IMR-90 (cell line): ENCODE measurements at regions of chr17 and their contacts with region 1.

Region 1: GRCh38 chr17:42101513-42102319 is 3.4 kb upstream of the ZNF385C start:
- DNase-seq: peak; percentile 57
- ATAC-seq: peak; percentile 99
- H3K4me3 ChIP-seq: no peak overlapping the region
- H3K27ac ChIP-seq: no peak overlapping the region
- H3K4me1 ChIP-seq: no peaks in the 10 kb centered on the region
- H3K27me3 ChIP-seq: peaks cover 36% of the 10 kb centered on the region
- CTCF ChIP-seq: peak; percentile 88
- POLR2A ChIP-seq: peak; percentile 43; the same call in 1 of the 2 replicates
- RAD21 ChIP-seq: peak; percentile 84

Region 2: DNA sequence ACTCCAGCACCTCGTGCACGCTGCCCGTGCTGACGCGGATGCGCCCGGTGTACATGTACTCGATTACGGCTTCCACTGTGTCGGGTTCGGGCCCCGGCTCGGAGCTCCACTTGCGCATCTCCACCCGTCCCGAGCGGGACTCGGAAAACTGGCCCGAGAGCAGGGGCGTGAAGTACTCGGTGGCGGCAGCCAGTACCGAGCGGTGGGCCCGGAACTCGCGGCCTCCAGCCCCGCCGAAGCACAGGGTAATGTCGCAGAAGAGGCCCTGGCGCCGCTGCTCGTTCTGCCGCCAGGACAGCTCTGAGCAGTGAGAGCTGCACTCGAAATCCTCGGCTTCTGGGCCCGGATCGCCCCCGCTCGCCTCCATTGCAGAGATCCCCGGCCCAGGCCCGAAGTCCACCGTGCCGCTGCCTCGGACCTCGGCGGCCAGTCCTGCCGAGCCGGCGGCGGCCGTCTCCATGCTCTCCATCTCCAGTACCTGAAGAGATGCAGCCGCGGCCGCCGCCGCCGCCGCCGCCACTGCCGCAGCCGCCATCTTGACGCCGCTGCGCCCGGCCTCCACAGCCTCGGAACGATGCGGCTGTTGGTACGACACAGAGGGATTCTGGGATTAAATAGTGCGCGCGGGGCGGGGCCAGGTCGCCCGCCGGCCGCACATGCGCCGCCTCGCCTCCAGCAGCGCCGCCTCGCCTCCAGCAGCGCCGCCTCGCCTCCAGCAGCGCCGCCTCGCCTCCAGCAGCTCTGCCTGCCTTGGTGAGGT is 236.7 kb before region 1 on chr17 and contains the start of gene KLHL11:
- CTCF ChIA-PET with region 1: no interaction called
- POLR2A ChIA-PET with region 1: no interaction called
- dilution Hi-C with region 1: no loop called
- in situ Hi-C with region 1: no loop called
- intact Hi-C with region 1: no loop called
- DNase-seq: peak; percentile 85
- ATAC-seq: peak; percentile 95
- H3K4me3 ChIP-seq: peak within 1 kb of the TSS; percentile 83
- H3K27ac ChIP-seq: peak within 1 kb of the TSS; percentile 72
- H3K4me1 ChIP-seq: peaks cover 11% of the 10 kb centered on the region
- H3K27me3 ChIP-seq: no peaks in the 10 kb centered on the region
- CTCF ChIP-seq: no peak
- POLR2A ChIP-seq: peak; percentile 79
- RAD21 ChIP-seq: peak; percentile 10; the same call in 1 of the 2 replicates
- total RNA-seq, gene KLHL11: 38.5 and 43.6 TPM in 2 replicates

Region 3: DNA sequence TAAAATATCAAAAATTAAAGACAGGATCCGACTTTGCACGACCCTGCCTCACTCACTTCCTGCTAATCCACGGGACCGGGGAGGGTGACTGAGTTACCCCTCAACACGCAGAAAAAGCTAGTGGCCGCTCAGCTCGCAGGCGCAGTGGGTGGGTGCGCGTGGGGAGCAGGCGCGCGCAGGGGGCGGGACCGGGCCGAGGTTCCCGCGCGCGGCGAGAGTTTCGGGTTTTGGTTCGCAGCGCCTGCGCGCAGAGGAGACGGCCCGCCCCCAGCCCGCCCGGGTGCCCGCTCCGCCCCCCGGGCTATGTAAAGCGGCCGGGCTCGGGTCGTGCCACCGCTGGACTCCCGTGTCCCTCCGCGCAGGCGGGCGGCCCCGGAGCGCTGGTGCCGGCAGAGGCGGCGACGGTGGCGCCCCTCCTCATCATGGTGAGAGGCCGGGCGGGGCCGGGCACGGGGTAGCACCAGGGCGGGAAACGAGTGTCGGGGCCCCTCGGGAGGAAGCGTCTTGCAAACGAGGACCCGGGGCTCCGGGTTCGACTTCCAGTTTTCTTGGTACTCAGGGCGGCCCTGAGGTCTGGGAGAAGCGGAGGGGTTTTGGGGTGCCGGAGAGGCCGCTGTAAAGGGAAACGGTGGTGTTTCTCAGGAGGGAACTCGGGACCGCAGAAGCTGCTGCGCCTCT is 135.1 kb before region 1 on chr17 and contains the start of gene CNP:
- CTCF ChIA-PET with region 1: interaction called, 7 read pairs
- POLR2A ChIA-PET with region 1: no interaction called
- dilution Hi-C with region 1: no loop called
- in situ Hi-C with region 1: no loop called
- intact Hi-C with region 1: loop called (anchors 2 kb)
- DNase-seq: peak; percentile 87
- ATAC-seq: peak; percentile 91
- H3K4me3 ChIP-seq: peak within 1 kb of the TSS; percentile 94
- H3K27ac ChIP-seq: peak within 1 kb of the TSS; percentile 81
- H3K4me1 ChIP-seq: peaks cover 11% of the 10 kb centered on the region
- H3K27me3 ChIP-seq: no peaks in the 10 kb centered on the region
- CTCF ChIP-seq: no peak
- POLR2A ChIP-seq: peak; percentile 89
- RAD21 ChIP-seq: no peak
- total RNA-seq, gene CNP: 45.5 and 50.3 TPM in 2 replicates

Region 4: DNA sequence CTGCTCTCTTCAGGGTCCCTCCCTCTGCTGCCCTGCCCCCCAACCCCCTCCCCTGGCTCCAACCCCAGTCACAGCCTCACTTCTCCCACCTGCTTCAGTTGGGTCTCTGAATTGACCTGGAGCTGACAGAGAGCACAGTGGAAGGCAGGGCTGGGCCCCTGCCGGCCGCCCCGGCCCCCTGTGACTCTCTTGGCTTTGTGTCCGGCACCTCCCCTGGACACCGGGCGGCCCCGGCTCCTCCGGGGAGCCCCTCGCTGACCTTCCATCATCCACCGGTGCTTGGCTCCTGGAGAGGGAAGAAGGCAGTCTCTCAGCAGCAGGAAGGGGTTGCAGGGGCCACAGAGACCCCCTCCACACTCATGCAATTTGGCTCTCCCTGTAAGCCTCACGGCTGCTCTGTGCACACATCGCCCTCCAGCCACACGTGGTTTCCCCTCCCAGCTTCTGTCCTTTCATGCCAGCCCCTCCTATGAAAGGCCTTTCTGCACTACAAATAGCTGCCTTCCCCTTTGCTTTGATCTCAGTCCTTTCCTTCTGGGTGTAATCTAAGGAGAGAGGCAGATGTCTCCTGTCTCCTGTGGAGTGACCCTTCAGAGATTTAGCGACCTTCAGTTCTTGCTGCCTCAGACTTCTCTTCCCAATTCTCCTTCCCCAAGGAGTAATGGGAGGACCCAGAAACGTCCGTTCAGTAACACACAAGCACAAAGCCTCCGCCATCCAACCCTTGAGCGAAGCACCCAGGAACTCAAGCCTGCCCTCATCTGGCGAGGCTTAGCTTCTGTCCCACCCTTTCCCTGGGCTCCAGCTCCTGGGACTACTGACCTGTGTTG is 73.5 kb before region 1 on chr17:
- CTCF ChIA-PET with region 1: no interaction called
- POLR2A ChIA-PET with region 1: no interaction called
- dilution Hi-C with region 1: no loop called
- in situ Hi-C with region 1: no loop called
- intact Hi-C with region 1: loop called (anchors 1 kb)
- DNase-seq: no peak
- ATAC-seq: no peak
- H3K4me3 ChIP-seq: no peak overlapping the region
- H3K27ac ChIP-seq: no peak overlapping the region
- H3K4me1 ChIP-seq: peaks cover 7% of the 10 kb centered on the region
- H3K27me3 ChIP-seq: peaks cover 16% of the 10 kb centered on the region
- CTCF ChIP-seq: 0 out of 2 replicates have a peak, but pooled peaks have one; percentile 4
- POLR2A ChIP-seq: no peak
- RAD21 ChIP-seq: no peak

Region 5: DNA sequence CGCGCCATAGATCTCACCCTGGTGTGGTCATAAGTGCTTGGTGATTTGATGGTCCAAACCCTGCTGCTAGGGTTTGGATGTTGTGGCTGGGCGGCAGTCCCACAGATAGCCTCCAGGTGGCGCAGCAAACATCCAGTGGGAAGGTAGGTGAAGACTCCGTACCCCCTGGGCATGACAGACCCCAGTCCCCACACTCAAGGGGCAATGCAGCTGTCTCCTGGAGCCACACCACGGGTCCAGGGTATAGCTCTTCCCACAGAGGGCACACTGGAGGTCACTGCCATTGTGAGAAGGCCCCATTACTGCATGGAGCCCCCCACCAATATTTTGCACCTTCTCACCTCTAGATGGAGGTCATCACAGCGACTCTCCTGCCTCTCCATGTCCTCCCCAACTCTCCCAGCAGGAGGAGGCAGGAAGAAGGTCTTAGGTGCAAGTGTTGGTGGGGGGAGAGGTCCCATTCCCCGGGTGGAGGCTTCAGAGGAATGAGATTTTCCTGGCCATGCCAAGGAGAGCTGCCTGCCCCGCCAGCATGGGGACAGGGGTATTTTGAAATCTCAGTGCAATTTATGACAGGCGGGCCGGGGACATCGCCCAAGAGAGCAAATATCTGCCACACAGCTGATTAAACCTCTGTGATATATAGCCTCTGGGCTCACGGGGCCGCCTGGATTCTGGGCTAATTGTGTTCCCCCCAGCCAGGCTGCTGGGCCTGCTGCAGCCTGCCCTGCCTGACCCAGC is 34.2 kb before region 1 on chr17:
- CTCF ChIA-PET with region 1: interaction called, 5 read pairs
- POLR2A ChIA-PET with region 1: no interaction called
- dilution Hi-C with region 1: no loop called
- in situ Hi-C with region 1: no loop called
- intact Hi-C with region 1: loop called (anchors 1 kb)
- DNase-seq: peak; percentile 23
- ATAC-seq: peak; percentile 88
- H3K4me3 ChIP-seq: no peak overlapping the region
- H3K27ac ChIP-seq: no peak overlapping the region
- H3K4me1 ChIP-seq: no peaks in the 10 kb centered on the region
- H3K27me3 ChIP-seq: peaks cover 58% of the 10 kb centered on the region
- CTCF ChIP-seq: peak; percentile 70
- POLR2A ChIP-seq: no peak
- RAD21 ChIP-seq: peak; percentile 46

Region 6: GRCh38 chr17:42266918-42267778 is 165.4 kb after region 1 on chr17:
- CTCF ChIA-PET with region 1: no interaction called
- POLR2A ChIA-PET with region 1: no interaction called
- dilution Hi-C with region 1: no loop called
- in situ Hi-C with region 1: no loop called
- intact Hi-C with region 1: no loop called
- DNase-seq: peak; percentile 99
- ATAC-seq: peak; percentile 81
- H3K4me3 ChIP-seq: no peak overlapping the region
- H3K27ac ChIP-seq: peak overlapping the region; percentile 90; the same call in 1 of the 2 replicates
- H3K4me1 ChIP-seq: peaks cover 13% of the 10 kb centered on the region
- H3K27me3 ChIP-seq: no peaks in the 10 kb centered on the region
- CTCF ChIP-seq: no peak
- POLR2A ChIP-seq: no peak
- RAD21 ChIP-seq: no peak

Region 7: GRCh38 chr17:42311240-42312034 is 209.7 kb after region 1 on chr17:
- CTCF ChIA-PET with region 1: no interaction called
- POLR2A ChIA-PET with region 1: interaction called, 13 read pairs
- dilution Hi-C with region 1: no loop called
- in situ Hi-C with region 1: no loop called
- intact Hi-C with region 1: no loop called
- DNase-seq: peak; percentile 94
- ATAC-seq: peak; percentile 91
- H3K4me3 ChIP-seq: no peak overlapping the region
- H3K27ac ChIP-seq: peak overlapping the region; percentile 45
- H3K4me1 ChIP-seq: peaks cover 11% of the 10 kb centered on the region
- H3K27me3 ChIP-seq: no peaks in the 10 kb centered on the region
- CTCF ChIP-seq: no peak
- POLR2A ChIP-seq: no peak
- RAD21 ChIP-seq: no peak